PC-9 (cell line): ENCODE measurements at regions of chr5 and their contacts with region 1.

Region 1: DNA sequence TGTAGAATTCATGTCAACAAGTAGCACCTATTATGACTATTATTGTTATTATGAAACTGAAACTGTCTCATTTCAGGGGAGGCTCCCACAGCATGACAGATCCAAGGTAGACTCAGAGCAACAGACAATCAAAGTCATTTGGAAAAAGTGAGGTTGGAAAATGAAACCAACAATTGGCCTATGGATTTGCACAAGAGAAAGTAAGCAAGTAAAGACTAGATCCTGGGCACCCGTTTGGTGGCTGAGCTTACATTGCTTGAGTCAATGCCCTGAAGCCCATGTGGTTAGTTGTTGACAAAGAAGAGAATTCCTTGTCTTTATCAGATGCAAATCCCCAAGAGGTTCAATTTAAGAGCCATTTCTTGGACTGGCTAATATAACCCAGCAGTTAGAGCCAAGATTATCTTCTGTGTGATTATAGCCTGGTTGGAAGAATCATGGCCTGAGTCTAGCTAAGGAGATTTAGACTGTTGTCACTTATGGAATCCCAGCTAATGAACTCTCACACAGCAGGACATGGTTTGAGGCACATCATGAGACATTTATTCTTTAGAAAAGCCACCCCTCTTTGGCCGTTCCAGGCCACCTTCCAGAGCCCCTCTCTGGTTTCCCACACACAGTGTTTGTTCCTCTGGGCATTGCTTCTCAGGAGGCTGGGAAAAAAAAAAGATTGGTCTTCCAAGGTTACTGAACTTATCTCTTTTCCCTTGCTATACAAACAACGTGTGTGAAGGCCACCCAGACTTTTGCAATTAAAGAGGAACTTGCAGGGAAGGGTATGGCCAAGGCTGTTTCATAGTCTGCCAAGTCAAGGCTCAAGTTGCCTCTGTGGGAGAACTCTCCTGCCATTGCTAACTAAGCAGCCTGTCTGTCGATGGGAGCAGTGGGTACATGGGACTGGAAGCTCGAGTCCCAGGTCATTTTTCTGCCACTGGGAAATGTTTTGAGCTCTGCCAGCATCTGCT is 399.5 kb downstream of the ENC1 start:
- DNase-seq: peak; percentile 50 to 96
- H3K4me3 ChIP-seq: peak overlapping the region; percentile 38; the same call in 1 of the 2 replicates
- H3K27ac ChIP-seq: peak overlapping the region; percentile 100
- H3K4me1 ChIP-seq: peaks cover 60% of the 10 kb centered on the region
- H3K27me3 ChIP-seq: no peaks in the 10 kb centered on the region
- CTCF ChIP-seq: 0 out of 2 replicates have a peak, but pooled peaks have one; percentile 11

Region 2: DNA sequence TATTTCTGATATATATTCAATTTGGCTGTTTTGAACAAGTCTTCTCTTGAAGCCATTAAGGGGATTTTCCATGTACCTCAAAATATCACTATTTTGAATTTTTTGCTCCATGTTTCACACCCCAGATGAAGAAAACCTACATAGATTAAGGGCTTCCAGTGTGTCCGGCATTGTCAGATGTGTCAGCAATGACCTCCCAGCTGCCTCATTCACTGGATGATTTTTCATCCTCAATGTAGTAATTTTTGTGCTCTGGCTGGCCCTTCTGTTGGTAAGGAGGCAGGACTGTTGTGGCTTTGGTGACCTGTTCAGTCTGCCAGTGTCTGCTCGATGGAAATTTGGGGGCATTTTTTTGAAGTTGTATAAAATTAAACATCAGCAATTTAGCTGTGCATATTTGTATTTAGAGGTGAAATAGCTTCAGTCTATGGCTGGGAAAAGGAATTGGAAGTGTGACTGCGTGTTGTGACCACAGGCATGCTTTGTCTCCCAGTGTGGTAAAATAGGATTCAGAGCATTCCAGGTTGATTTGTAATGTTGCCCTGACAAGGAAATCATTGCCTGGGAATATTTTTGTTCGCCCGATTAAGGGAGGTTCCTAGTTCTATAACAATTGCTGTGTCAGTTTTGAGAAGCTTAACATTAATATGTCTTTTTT is 302.7 kb before region 1 on chr5:
- CTCF ChIA-PET with region 1: no interaction called
- POLR2A ChIA-PET with region 1: interaction called, 4 read pairs
- intact Hi-C with region 1: loop called (anchors 1 kb)
- DNase-seq: peak; percentile 77 to 98
- H3K4me3 ChIP-seq: peak overlapping the region; percentile 28; the same call in 1 of the 2 replicates
- H3K27ac ChIP-seq: peak overlapping the region; percentile 98
- H3K4me1 ChIP-seq: peaks cover 33% of the 10 kb centered on the region
- H3K27me3 ChIP-seq: no peaks in the 10 kb centered on the region
- CTCF ChIP-seq: no peak

Region 3: GRCh38 chr5:74201334-74202081 is 39.6 kb before region 1 on chr5:
- CTCF ChIA-PET with region 1: interaction called, 4 read pairs
- POLR2A ChIA-PET with region 1: interaction called, 11 read pairs
- intact Hi-C with region 1: loop called (anchors 2 kb)
- DNase-seq: peak; percentile 61 to 81
- H3K4me3 ChIP-seq: peak overlapping the region; percentile 29; the same call in 1 of the 2 replicates
- H3K27ac ChIP-seq: peak overlapping the region; percentile 91
- H3K4me1 ChIP-seq: peaks cover 44% of the 10 kb centered on the region
- H3K27me3 ChIP-seq: no peaks in the 10 kb centered on the region
- CTCF ChIP-seq: no peak

Region 4: GRCh38 chr5:74272024-74272775 is 31.1 kb after region 1 on chr5:
- CTCF ChIA-PET with region 1: interaction called, 4 read pairs
- POLR2A ChIA-PET with region 1: interaction called, 3 read pairs
- intact Hi-C with region 1: loop called (anchors 1 kb)
- DNase-seq: peak; percentile 59 to 80
- H3K4me3 ChIP-seq: no peak overlapping the region
- H3K27ac ChIP-seq: peak overlapping the region; percentile 71
- H3K4me1 ChIP-seq: peaks cover 22% of the 10 kb centered on the region
- H3K27me3 ChIP-seq: no peaks in the 10 kb centered on the region
- CTCF ChIP-seq: no peak

Region 5: GRCh38 chr5:74534397-74535129 is 293.5 kb after region 1 on chr5:
- CTCF ChIA-PET with region 1: no interaction called
- POLR2A ChIA-PET with region 1: no interaction called
- intact Hi-C with region 1: no loop called
- DNase-seq: no peak
- H3K4me3 ChIP-seq: no peak overlapping the region; the same call in 1 of the 2 replicates
- H3K27ac ChIP-seq: no peak overlapping the region
- H3K4me1 ChIP-seq: peaks cover 35% of the 10 kb centered on the region
- H3K27me3 ChIP-seq: no peaks in the 10 kb centered on the region
- CTCF ChIP-seq: no peak

Region 6: DNA sequence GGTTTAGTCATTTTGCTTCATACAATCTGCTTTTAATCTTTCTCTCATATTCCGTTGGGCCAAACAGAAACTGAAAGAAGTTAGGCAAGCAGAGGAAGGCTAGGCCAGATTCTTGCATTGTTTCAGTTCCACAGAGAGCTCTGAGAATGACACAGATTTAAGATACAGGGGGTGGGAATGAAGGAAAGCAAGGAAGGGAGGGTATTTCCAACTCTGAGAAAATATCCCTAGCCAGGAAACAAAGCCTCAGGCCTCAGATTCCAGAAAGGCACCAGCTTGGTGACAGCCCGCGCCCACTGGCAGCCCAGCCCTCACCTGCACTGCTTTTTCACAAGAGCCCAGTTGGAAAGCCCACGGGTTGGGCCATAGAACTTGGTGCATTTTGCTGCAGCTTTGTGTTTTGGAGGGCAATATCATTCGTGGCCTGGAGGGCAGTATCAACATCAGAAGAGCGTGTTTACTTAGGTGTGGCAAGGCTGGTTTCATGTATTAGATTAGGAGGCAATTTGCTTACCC is 335.9 kb after region 1 on chr5:
- CTCF ChIA-PET with region 1: no interaction called
- POLR2A ChIA-PET with region 1: no interaction called
- intact Hi-C with region 1: loop called (anchors 5 kb)
- DNase-seq: peak; percentile 53 to 68
- H3K4me3 ChIP-seq: no peak overlapping the region
- H3K27ac ChIP-seq: peak overlapping the region; percentile 82
- H3K4me1 ChIP-seq: peaks cover 31% of the 10 kb centered on the region
- H3K27me3 ChIP-seq: no peaks in the 10 kb centered on the region
- CTCF ChIP-seq: no peak